ENCODE measurements at regions of chr11 and their contacts with region 1.

Region 1: DNA sequence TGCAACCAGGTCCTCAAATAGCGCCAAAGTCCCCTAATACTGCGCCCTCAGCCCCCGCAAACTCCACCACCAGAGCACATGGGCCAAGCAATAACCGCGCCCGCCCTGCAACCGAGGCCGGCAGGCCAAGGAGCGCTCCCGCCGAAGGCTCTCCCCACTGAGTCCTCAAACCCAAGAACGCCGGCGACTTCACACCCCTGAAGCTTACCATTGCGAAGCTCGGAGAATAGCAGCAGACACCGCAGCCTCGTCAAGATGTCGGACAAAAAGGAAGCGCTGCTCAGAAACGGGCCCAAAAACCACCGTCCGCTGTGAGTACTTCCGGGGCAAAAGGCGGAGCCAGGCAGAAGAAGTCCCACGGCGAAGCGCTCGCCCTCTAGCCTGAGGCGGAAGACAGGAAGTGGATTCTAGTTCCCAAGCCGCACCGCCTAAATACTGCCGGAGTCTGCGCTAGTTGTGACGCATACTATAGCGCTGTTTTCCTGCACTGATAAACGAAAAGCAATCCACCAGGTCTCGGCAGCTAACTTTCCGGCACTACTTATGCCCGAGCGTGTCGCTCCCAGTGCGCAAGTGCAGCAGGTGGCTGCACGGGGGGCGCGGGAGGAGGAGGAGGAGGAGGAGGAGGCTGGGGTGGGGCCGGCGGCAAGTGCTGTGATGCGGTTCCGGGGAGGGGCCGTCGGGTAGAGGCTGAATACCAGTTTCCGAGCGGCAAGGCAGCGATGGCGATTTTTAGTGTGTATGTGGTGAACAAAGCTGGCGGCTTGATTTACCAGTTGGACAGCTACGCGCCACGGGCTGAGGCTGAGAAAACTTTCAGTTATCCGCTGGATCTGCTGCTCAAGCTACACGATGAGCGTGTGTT is at the starts of genes RPS25 and TRAPPC4:
- DNase-seq: peak; percentile 84 to 97 (median 86)
- ATAC-seq: peak; percentile 91
- H3K4me3 ChIP-seq: peak within 1 kb of the TSS; percentile 99
- H3K27ac ChIP-seq: peak within 1 kb of the TSS; percentile 97
- H3K4me1 ChIP-seq: peaks cover 9 to 12% of the 10 kb centered on the region in 2 experiments; a peak in 4 of 5 replicates
- H3K27me3 ChIP-seq: no peaks in the 10 kb centered on the region
- CTCF ChIP-seq: no peak
- EP300 ChIP-seq: 0 out of 2 replicates have a peak, but pooled peaks have one; percentile 2
- POLR2A ChIP-seq: peak; percentile 98
- RAD21 ChIP-seq: no peak
- polyA plus RNA-seq, gene RPS25: 2,471 to 2,886 TPM
- polyA plus RNA-seq, gene TRAPPC4: 455 to 524 TPM

Region 2: GRCh38 chr11:118957968-118958367 is 60.3 kb before region 1 on chr11:
- CTCF ChIA-PET with region 1: no interaction called
- POLR2A ChIA-PET with region 1: no interaction called
- in situ Hi-C with region 1: no loop called
- intact Hi-C with region 1: no loop called
- DNase-seq: no peak
- ATAC-seq: no peak
- H3K4me3 ChIP-seq: no peak overlapping the region
- H3K27ac ChIP-seq: no peak overlapping the region
- H3K4me1 ChIP-seq: peaks cover 0 to 22% of the 10 kb centered on the region in 2 experiments; a peak in 3 of 5 replicates
- H3K27me3 ChIP-seq: peaks cover 8 to 27% of the 10 kb centered on the region in 2 experiments; a peak in 4 of 5 replicates
- CTCF ChIP-seq: no peak
- EP300 ChIP-seq: no peak
- POLR2A ChIP-seq: no peak
- RAD21 ChIP-seq: no peak

Region 3: DNA sequence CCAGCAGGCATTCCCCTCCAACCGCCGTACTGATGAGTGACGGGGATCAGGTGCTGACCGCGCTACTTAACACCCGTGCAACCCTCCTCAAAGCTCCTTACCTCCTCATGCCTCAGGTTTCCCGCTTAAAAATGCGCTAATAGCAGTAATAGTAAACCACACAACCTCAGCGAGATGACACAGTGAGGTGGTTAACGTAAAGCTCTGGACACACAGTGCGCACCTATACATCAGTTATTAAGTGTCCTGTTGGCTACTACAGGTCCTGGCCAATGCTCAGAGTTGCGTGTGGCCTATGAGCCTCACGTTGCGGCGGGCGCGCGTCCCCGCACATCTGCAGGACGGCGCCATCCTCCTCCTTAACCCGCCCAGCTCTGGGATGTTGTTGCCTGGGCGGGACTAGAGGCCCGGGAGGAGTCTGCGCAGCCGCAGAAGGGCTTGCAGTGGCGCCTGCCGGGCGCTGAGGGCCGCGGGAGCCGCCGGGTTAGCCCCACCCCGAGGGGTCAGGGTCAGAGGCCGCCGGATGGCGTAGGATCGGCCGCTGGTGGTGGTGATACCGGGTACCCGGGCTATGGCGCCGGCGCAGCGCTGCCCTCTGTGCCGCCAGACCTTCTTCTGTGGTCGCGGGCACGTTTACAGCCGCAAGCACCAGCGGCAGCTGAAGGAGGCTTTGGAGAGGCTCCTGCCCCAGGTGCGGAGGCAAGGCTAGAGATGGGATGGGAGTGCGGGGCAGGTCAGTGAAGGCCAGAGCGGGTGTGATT is 20.5 kb before region 1 on chr11 and contains the start of gene CENATAC:
- CTCF ChIA-PET with region 1: no interaction called
- POLR2A ChIA-PET with region 1: interaction called, 22 read pairs
- in situ Hi-C with region 1: no loop called
- intact Hi-C with region 1: loop called (anchors 1 kb)
- DNase-seq: peak; percentile 98 to 99 (median 99)
- ATAC-seq: peak; percentile 96
- H3K4me3 ChIP-seq: peak within 1 kb of the TSS; percentile 83
- H3K27ac ChIP-seq: peak within 1 kb of the TSS; percentile 73
- H3K4me1 ChIP-seq: peaks cover 11 to 13% of the 10 kb centered on the region in 2 experiments; a peak in 4 of 5 replicates
- H3K27me3 ChIP-seq: no peaks in the 10 kb centered on the region
- CTCF ChIP-seq: peak; percentile 10 to 24 (median 16); a peak in 1 of 6 replicates
- EP300 ChIP-seq: no peak
- POLR2A ChIP-seq: peak; percentile 89
- RAD21 ChIP-seq: no peak
- polyA plus RNA-seq, gene CENATAC: 2.4 to 4.5 TPM

Region 4: GRCh38 chr11:119030329-119031049 is 12.2 kb after region 1 on chr11 and contains the start of gene SLC37A4:
- CTCF ChIA-PET with region 1: no interaction called
- POLR2A ChIA-PET with region 1: interaction called, 33 read pairs
- in situ Hi-C with region 1: no loop called
- intact Hi-C with region 1: loop called (anchors 1 kb)
- DNase-seq: peak; percentile 95 to 99 (median 96)
- ATAC-seq: peak; percentile 92
- H3K4me3 ChIP-seq: peak within 1 kb of the TSS; percentile 92
- H3K27ac ChIP-seq: peak within 1 kb of the TSS; percentile 92
- H3K4me1 ChIP-seq: peaks cover 30 to 41% of the 10 kb centered on the region in 2 experiments; a peak in 4 of 5 replicates
- H3K27me3 ChIP-seq: no peaks in the 10 kb centered on the region
- CTCF ChIP-seq: peak; percentile 94 to 96 (median 95)
- EP300 ChIP-seq: 0 out of 2 replicates have a peak, but pooled peaks have one; percentile 34
- POLR2A ChIP-seq: peak; percentile 73
- RAD21 ChIP-seq: peak; percentile 60 to 74; a peak in 3 of 4 replicates
- polyA plus RNA-seq, gene SLC37A4: 24.7 to 40.7 TPM

Region 5: GRCh38 chr11:119084663-119085436 is 66.5 kb after region 1 on chr11 and contains the start of gene HMBS:
- CTCF ChIA-PET with region 1: no interaction called
- POLR2A ChIA-PET with region 1: interaction called, 3 read pairs
- in situ Hi-C with region 1: no loop called
- intact Hi-C with region 1: loop called (anchors 5 kb)
- DNase-seq: peak; percentile 86 to 98 (median 88)
- ATAC-seq: peak; percentile 82
- H3K4me3 ChIP-seq: peak within 1 kb of the TSS; percentile 79
- H3K27ac ChIP-seq: peak within 1 kb of the TSS; percentile 99
- H3K4me1 ChIP-seq: peaks cover 25 to 42% of the 10 kb centered on the region in 2 experiments; a peak in 4 of 5 replicates
- H3K27me3 ChIP-seq: no peaks in the 10 kb centered on the region
- CTCF ChIP-seq: no peak
- EP300 ChIP-seq: no peak
- POLR2A ChIP-seq: peak; percentile 92
- RAD21 ChIP-seq: 0 out of 4 replicates have a peak, but pooled peaks of 1 of the 2 experiments have one; percentile 6
- polyA plus RNA-seq, gene HMBS: 308 to 385 TPM

Measured in K562 (cell line).